ENCODE measurements at regions of chr2 and their contacts with region 1.

Region 1: DNA sequence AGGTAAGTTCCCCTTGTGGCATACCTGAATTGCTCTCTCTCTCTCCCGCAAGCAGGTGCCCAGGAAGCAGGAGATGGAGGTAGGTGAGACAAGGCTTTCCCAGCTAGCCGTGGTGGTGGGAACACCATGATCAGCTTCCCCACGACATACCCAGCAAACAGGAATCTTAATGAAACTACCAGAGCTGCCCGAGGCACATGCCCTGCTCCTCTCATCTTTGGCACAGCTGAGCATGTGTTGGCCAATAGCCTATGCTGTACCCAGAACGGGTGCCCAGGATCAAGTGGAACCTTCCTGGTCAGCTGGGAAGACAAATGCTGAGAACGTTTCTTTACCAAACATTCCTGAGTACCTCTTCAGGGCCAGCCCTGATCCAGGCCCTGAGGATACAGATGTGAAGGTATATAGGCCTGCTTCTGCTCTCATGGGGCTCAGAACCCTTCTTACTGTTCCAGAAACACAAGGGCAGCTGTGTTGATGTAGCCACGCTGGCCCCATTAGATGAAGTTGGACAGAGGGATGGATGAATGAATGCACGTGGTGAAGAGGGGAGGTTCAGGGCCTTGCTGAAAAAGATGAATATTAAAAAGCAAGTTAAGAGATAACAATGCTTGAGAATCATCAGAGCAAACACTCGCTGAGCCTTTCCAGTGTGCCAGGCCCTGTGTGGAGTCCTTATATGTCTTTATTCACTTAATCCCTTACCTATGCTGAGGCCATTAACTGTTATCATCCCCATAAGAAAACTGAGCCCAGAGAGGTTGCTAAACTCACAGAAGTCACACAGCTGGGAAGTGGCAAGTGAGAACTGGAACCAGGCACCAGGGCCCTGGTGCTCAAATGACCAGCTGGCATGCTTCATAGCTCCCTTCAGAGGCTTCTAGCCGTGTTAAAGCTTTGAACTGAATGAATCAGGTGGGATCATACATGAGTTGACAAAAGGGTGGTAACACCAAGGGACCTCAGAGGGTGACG is 68.8 kb upstream of the TMEM247 start:
- DNase-seq: peak in 1 of 2 experiments; percentile 73
- H3K4me3 ChIP-seq: peak overlapping the region; percentile 28; the same call in 1 of the 2 replicates
- H3K27ac ChIP-seq: peak overlapping the region; percentile 98
- H3K4me1 ChIP-seq: peaks cover 88% of the 10 kb centered on the region
- H3K27me3 ChIP-seq: no peaks in the 10 kb centered on the region
- CTCF ChIP-seq: no peak

Region 2: GRCh38 chr2:45315861-45316260 is 1094.7 kb before region 1 on chr2:
- CTCF ChIA-PET with region 1: no interaction called
- POLR2A ChIA-PET with region 1: no interaction called
- intact Hi-C with region 1: no loop called
- DNase-seq: no peak
- H3K4me3 ChIP-seq: no peak overlapping the region
- H3K27ac ChIP-seq: no peak overlapping the region
- H3K4me1 ChIP-seq: no peaks in the 10 kb centered on the region
- H3K27me3 ChIP-seq: no peaks in the 10 kb centered on the region
- CTCF ChIP-seq: no peak

Region 3: GRCh38 chr2:45993476-45993991 is 417.0 kb before region 1 on chr2:
- CTCF ChIA-PET with region 1: interaction called, 3 read pairs
- POLR2A ChIA-PET with region 1: no interaction called
- intact Hi-C with region 1: loop called (anchors 1 kb)
- DNase-seq: peak; percentile 59 to 74
- H3K4me3 ChIP-seq: no peak overlapping the region
- H3K27ac ChIP-seq: peak overlapping the region; percentile 88
- H3K4me1 ChIP-seq: peaks cover 36% of the 10 kb centered on the region
- H3K27me3 ChIP-seq: no peaks in the 10 kb centered on the region
- CTCF ChIP-seq: peak; percentile 95

Region 4: DNA sequence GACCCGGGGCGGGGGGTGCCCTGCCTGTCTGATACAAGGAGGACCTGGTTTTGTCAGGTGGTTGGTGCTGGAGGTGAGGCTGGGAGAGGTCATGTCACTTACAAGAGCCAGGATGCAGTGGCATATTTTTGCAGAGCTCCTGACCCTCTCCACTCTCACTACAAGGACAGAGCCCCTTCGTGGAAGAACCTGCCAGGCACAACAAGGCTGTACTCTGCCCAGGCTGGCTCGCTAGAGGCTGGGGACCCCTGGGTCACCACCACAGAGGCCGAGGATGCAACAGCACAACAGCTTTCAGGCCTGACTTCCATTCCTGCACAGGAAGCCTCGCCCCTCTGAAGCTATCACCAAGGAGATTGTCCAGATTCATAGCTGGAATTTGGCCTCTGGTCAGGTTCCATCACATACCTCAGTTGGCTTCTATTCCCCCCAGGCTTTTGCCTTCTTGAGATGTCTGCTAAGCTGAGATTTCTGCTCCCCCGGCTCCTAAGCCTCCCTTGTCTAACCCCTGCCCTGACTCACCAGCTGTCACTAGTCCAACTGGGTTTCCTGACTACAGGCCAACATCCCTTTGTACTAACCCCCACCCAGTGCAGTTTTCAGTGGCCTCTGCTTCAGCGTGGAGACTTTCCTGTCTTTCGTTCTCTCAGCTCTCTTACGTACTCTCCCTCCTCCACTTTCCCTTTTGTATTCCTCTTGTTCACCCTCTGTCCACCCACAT is 245.8 kb before region 1 on chr2:
- CTCF ChIA-PET with region 1: no interaction called
- POLR2A ChIA-PET with region 1: no interaction called
- intact Hi-C with region 1: loop called (anchors 1 kb)
- DNase-seq: peak; percentile 93 to 99
- H3K4me3 ChIP-seq: peak overlapping the region; percentile 36; the same call in 1 of the 2 replicates
- H3K27ac ChIP-seq: peak overlapping the region; percentile 96
- H3K4me1 ChIP-seq: peaks cover 74% of the 10 kb centered on the region
- H3K27me3 ChIP-seq: no peaks in the 10 kb centered on the region
- CTCF ChIP-seq: 0 out of 2 replicates have a peak, but pooled peaks have one; percentile 13

Region 5: GRCh38 chr2:46306330-46306751 is 104.2 kb before region 1 on chr2:
- CTCF ChIA-PET with region 1: no interaction called
- POLR2A ChIA-PET with region 1: no interaction called
- intact Hi-C with region 1: loop called (anchors 1 kb)
- DNase-seq: peak; percentile 40 to 100
- H3K4me3 ChIP-seq: peak overlapping the region; percentile 43; the same call in 1 of the 2 replicates
- H3K27ac ChIP-seq: peak overlapping the region; percentile 87
- H3K4me1 ChIP-seq: peaks cover 98% of the 10 kb centered on the region
- H3K27me3 ChIP-seq: no peaks in the 10 kb centered on the region
- CTCF ChIP-seq: no peak

Region 6: DNA sequence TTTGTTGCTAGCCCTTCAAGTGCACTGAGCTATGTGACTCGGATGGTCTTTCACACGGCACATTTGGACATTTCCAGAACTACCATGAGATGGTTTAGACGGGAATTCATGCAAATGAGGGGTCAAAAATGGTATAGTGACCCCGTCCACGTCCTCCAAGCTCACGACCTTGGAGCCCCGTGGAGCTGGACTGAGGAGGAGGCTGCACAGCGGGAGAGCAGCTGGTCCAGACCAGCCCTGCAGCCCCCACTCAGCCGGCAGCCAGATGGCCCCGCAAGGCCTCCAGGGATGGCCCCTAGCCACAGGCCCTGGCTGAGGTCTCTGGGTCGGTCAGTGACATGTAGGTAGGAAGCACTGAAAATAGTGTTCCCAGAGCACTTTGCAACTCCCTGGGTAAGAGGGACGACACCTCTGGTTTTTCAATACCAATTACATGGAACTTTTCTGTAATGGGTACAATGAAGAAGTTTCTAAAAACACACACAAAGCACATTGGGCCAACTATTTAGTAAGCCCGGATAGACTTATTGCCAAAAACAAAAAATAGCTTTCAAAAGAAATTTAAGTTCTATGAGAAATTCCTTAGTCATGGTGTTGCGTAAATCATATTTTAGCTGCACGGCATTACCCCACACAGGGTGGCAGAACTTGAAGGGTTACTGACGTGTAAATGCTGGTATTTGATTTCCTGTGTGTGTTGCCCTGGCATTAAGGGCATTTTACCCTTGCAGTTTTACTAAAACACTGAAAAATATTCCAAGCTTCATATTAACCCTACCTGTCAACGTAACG is 24.6 kb before region 1 on chr2:
- CTCF ChIA-PET with region 1: no interaction called
- POLR2A ChIA-PET with region 1: interaction called, 3 read pairs
- intact Hi-C with region 1: loop called (anchors 2 kb)
- DNase-seq: peak in 1 of 2 experiments; percentile 85
- H3K4me3 ChIP-seq: peak overlapping the region; percentile 3; the same call in 1 of the 2 replicates
- H3K27ac ChIP-seq: peak overlapping the region; percentile 81
- H3K4me1 ChIP-seq: peaks cover 32% of the 10 kb centered on the region
- H3K27me3 ChIP-seq: no peaks in the 10 kb centered on the region
- CTCF ChIP-seq: no peak

Region 7: GRCh38 chr2:46461011-46461674 is 50.6 kb after region 1 on chr2:
- CTCF ChIA-PET with region 1: interaction called, 3 read pairs
- POLR2A ChIA-PET with region 1: interaction called, 24 read pairs
- intact Hi-C with region 1: loop called (anchors 1 kb)
- DNase-seq: peak; percentile 65 to 86
- H3K4me3 ChIP-seq: no peak overlapping the region
- H3K27ac ChIP-seq: no peak overlapping the region
- H3K4me1 ChIP-seq: peaks cover 7% of the 10 kb centered on the region
- H3K27me3 ChIP-seq: no peaks in the 10 kb centered on the region
- CTCF ChIP-seq: peak; percentile 100

Measured in PC-9 (cell line).